Activated T-helper 2 cell treated with anti-CD3 and anti-CD28 coated beads, Interferon-gamma antibody, Interleukin-2, Interleukin-4, amounts not matched to agents 10 μg/mL and 5 μg/mL and 100 μg/mL, durations not matched to agents 14 hours and 24 hours and 36 hours (primary cell): ENCODE measurements at regions of chr3 and their contacts with region 1.

Region 1: GRCh38 chr3:43621656-43622432 is at the start of gene ANO10:
- DNase-seq: peak; percentile 92
- H3K4me3 Mint-ChIP-seq: peak within 1 kb of the TSS; percentile 89
- H3K27ac Mint-ChIP-seq: peak within 1 kb of the TSS; percentile 77
- H3K4me1 Mint-ChIP-seq: peaks cover 13% of the 10 kb centered on the region
- H3K27me3 Mint-ChIP-seq: peaks cover 29% of the 10 kb centered on the region
- total RNA-seq, gene ANO10: 3.9 and 4.9 TPM in 2 replicates

Region 2: DNA sequence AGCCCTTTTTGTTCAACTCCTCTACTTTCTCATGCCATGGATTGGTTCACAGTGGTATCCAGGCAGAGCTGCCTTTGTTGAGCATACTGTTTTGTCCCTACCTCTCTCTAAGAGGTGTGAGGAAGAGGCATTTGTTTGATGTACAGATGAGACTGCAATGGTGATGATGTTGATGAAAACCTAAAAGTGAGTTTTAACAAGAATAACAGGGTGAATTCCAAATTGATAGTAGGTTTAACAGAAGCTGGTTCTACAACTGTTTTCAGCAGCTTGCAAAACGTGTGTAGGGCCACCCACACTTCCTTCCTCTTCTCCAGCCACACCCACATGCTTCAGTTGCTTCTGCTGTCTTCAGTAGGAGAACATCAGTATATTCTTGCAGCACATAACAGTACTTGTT is 325.3 kb before region 1 on chr3:
- intact Hi-C with region 1: loop called (anchors 10 kb)
- DNase-seq: peak; percentile 56
- H3K4me3 Mint-ChIP-seq: peak overlapping the region; percentile 70
- H3K27ac Mint-ChIP-seq: peak overlapping the region; percentile 78
- H3K4me1 Mint-ChIP-seq: peaks cover 66% of the 10 kb centered on the region
- H3K27me3 Mint-ChIP-seq: no peaks in the 10 kb centered on the region

Region 3: GRCh38 chr3:43978708-43979107 is 356.9 kb after region 1 on chr3:
- intact Hi-C with region 1: no loop called
- DNase-seq: no peak
- H3K4me3 Mint-ChIP-seq: no peak overlapping the region
- H3K27ac Mint-ChIP-seq: no peak overlapping the region
- H3K4me1 Mint-ChIP-seq: no peaks in the 10 kb centered on the region
- H3K27me3 Mint-ChIP-seq: peaks cover 22% of the 10 kb centered on the region